ENCODE measurements at regions of chr1 and their contacts with region 1.

Region 1: DNA sequence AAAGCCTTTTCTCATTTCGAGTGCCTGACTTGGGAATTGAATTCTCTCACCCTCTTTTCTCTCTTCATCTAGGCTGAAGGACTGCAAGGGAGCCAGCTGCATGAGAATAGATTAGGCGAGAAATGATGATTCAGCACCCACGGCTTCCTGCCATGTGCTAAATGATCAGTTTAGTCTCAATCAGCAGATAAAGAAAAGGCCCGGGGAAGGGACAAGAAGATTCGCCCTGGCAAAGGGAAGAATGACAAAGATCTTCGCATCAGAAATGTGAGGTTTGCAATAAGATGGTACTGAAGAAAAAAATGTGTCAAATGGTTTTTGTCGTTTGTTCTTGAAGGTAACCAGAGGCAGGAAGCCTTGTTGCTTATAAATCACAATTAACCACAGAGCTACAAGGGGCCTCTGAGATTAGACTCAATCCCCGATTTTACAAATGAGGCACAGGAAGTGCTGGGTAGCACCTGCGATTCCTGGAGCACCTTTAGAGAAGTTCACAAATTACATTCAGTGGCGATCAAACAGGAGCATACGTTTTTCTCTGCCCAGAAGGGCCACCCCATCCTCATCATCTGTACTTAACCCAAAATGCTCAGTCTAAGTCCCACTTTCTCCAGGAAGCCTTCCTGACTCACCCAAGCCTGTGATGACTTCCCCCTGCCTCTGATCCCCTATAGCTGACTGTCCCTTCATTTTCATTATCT is 183.4 kb downstream of the ZNF281 start:
- DNase-seq: peak; percentile 70
- H3K4me3 Mint-ChIP-seq: peak overlapping the region; percentile 3
- H3K27ac Mint-ChIP-seq: peak overlapping the region; percentile 64
- H3K4me1 Mint-ChIP-seq: peaks cover 17% of the 10 kb centered on the region
- H3K27me3 Mint-ChIP-seq: peaks cover 4% of the 10 kb centered on the region

Region 2: DNA sequence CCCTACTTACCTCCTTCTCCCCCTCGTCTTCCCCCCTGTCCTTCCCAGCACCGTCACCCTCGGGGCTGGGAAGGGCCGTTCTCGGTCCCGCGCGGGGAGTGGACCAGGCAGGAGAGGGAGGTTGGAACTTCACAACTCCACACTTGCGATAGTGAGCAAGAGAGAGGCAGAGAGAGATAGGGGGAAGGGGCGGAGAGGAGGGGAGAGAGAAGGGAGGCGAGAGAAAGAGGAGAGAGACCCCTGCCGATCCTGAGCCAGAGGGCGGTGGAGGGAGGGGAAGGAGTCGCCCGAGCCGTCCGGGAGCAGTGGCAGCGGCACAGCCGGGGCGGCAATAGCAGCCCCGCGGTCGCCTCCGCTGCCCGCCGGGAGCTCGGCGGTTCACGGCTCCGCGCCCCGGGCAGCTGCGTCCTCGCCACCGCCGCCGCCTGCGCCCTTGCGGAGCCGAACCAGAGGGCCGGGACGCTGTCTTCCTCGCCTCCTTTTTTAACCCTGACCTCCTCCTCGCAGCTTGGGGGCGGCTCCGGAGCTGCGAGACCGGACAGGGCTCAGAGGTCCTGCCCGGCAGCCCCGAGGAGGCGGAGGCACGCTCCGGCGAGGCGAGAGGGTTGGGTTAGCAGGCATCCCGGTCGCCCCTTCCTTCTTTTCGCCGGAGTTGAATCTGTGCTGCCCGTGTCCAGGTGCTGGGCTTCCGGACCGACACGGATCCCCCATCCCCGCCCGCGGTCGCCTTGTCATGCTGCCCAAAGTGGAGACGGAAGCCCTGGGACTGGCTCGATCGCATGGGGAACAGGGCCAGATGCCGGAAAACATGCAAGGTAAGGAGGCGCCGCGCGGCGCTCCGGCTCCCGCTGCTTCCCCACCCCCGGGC is 187.2 kb before region 1 on chr1:
- CTCF ChIA-PET with region 1: no interaction called
- intact Hi-C with region 1: loop called (anchors 5 kb)
- DNase-seq: peak; percentile 35
- H3K4me3 Mint-ChIP-seq: peak overlapping the region; percentile 69
- H3K27ac Mint-ChIP-seq: no peak overlapping the region
- H3K4me1 Mint-ChIP-seq: peaks cover 34% of the 10 kb centered on the region
- H3K27me3 Mint-ChIP-seq: peaks cover 44% of the 10 kb centered on the region

Region 3: DNA sequence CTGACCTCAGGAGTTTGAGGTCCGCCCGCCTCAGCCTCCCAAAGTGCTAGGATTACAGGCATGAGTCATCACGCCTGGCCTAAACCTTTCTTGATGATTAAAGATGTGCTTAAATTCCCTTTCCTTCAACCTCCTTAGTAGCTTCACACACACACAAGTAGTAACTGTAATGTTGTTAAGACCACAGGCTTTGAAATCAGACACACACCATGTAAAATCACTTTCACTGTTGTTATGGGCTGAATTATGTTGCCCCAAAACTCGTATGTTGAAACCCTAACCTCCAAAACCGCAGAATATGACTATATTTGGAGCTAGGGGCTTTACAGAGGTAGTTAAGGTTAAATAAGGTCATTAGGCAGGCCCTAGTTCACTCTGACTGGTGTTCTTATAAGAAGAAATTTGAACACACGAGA is 18.7 kb before region 1 on chr1:
- CTCF ChIA-PET with region 1: no interaction called
- intact Hi-C with region 1: loop called (anchors 1 kb)
- DNase-seq: no peak
- H3K4me3 Mint-ChIP-seq: no peak overlapping the region
- H3K27ac Mint-ChIP-seq: no peak overlapping the region
- H3K4me1 Mint-ChIP-seq: peaks cover 8% of the 10 kb centered on the region
- H3K27me3 Mint-ChIP-seq: no peaks in the 10 kb centered on the region

Region 4: GRCh38 chr1:200238311-200238710 is 11.9 kb after region 1 on chr1:
- CTCF ChIA-PET with region 1: interaction called, 11 read pairs
- intact Hi-C with region 1: no loop called
- DNase-seq: no peak
- H3K4me3 Mint-ChIP-seq: no peak overlapping the region
- H3K27ac Mint-ChIP-seq: no peak overlapping the region
- H3K4me1 Mint-ChIP-seq: peaks cover 8% of the 10 kb centered on the region
- H3K27me3 Mint-ChIP-seq: peaks cover 5% of the 10 kb centered on the region